A549 (cell line): ENCODE measurements at regions of chr4 and their contacts with region 1.

Region 1: DNA sequence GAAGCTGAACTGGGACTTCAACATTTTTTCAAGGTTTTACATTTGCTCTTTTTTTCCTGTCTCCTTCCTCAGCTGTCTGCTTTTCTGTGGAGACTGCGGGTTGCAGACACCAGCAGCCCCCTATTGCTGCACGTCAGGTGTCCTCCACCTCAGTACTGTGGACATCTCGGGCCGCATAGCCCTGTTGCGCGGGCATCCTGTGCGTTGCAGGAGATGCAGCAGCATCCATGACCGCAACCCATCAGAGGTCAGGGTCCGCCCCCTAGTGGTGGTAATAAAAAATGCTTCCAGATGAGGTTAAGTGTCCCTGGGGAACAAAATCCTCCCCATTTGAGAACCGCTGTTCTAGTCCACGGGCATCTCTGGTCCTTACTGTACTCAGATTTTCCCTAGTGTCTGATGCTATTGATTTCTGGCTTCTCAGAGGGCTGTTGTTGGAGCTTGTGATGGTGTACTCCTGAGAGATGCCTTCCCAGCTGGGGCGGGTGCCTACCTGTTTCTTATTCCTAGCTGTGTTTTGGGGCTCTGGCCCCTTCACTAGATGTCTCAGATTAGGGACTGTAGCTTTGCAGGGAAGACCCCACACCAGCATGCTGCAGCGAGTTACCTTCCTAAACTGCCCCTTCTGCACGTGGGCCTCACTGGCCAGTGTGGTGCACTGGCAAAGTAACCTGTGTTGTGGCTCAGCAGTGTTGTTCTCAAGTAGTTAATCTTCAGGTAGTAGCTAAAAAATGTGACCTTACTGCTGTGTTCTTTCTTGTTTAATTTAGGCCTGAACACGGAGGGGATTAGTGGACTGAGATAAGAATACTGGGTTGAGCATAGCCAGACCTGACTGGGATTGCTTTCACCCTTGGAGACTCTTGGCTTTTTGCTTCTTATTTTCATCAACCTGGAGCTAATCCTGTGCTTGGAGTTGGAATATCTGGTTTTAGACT is 28.2 kb downstream of the NSD2 start:
- DNase-seq: peak; percentile 76 to 84
- ATAC-seq: peak; percentile 97
- H3K4me3 ChIP-seq: no peak overlapping the region
- H3K27ac ChIP-seq: no peak overlapping the region
- H3K4me1 ChIP-seq: peaks cover 8% of the 10 kb centered on the region; the same call in 2 of the 3 replicates
- CTCF ChIP-seq: peak; percentile 69
- EP300 ChIP-seq: no peak
- POLR2A ChIP-seq: no peak
- RAD21 ChIP-seq: peak; percentile 70

Region 2: GRCh38 chr4:1809754-1810511 is 89.5 kb before region 1 on chr4:
- CTCF ChIA-PET with region 1: interaction called, 65 read pairs
- POLR2A ChIA-PET with region 1: no interaction called
- DNase-seq: peak; percentile 69 to 72
- ATAC-seq: peak; percentile 85 to 94
- H3K4me3 ChIP-seq: no peak overlapping the region
- H3K27ac ChIP-seq: no peak overlapping the region
- H3K4me1 ChIP-seq: no peaks in the 10 kb centered on the region
- CTCF ChIP-seq: peak; percentile 85
- EP300 ChIP-seq: no peak
- POLR2A ChIP-seq: no peak
- RAD21 ChIP-seq: peak; percentile 86 to 87

Region 3: DNA sequence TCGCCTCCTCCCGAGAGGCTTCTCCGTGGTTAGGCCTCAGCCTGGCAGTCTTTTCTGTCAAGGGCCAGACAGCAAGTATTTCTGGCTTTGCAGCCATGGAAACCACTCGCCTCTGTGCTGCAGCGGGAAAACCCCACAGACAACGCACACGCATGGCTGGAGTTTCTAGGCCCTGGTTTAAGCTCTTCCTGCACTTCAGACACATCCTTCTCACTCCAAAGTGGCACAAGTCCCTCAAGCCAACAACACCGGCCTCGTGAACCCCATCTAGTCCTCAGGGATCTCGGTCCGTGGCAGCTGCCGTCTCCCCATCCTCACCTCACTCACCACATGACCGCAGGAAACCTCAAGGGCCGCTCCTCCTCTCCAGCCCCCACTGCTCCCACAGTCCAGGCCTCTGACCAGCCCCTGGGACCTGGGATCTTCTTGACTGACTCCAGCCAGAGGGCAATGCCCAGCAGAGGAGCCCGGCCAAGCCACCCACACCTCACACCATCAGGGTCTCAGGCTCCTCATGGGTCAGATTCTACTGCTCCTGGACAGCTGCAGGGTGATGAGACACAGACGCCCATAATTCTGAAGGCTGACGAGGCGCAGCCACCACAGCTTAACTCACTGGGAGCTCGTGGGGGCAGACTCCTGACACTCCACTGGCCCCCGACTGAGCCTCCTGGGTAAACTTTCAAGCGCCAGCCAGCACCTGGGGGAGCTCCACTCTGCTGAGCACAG is 65.2 kb before region 1 on chr4:
- CTCF ChIA-PET with region 1: interaction called, 13 read pairs
- POLR2A ChIA-PET with region 1: no interaction called
- DNase-seq: no peak
- ATAC-seq: no peak
- H3K4me3 ChIP-seq: no peak overlapping the region
- H3K27ac ChIP-seq: no peak overlapping the region
- H3K4me1 ChIP-seq: no peaks in the 10 kb centered on the region
- CTCF ChIP-seq: no peak
- EP300 ChIP-seq: no peak
- POLR2A ChIP-seq: no peak
- RAD21 ChIP-seq: no peak

Region 4: GRCh38 chr4:1870578-1871443 is 28.6 kb before region 1 on chr4 and contains the start of gene NSD2:
- CTCF ChIA-PET with region 1: interaction called, 22 read pairs
- POLR2A ChIA-PET with region 1: interaction called, 3 read pairs
- DNase-seq: peak; percentile 81 to 83
- ATAC-seq: peak; percentile 70 to 74
- H3K4me3 ChIP-seq: peak within 1 kb of the TSS; percentile 85
- H3K27ac ChIP-seq: peak within 1 kb of the TSS; percentile 100
- H3K4me1 ChIP-seq: peaks cover 43% of the 10 kb centered on the region
- CTCF ChIP-seq: no peak
- EP300 ChIP-seq: no peak
- POLR2A ChIP-seq: peak; percentile 42
- RAD21 ChIP-seq: no peak
- polyA plus RNA-seq, gene NSD2: 49.3 and 52.6 TPM in 2 replicates

Region 5: GRCh38 chr4:1883583-1883982 is 15.8 kb before region 1 on chr4:
- CTCF ChIA-PET with region 1: interaction called, 60 read pairs
- POLR2A ChIA-PET with region 1: no interaction called
- DNase-seq: no peak
- ATAC-seq: no peak
- H3K4me3 ChIP-seq: no peak overlapping the region
- H3K27ac ChIP-seq: no peak overlapping the region
- H3K4me1 ChIP-seq: peaks cover 13% of the 10 kb centered on the region
- CTCF ChIP-seq: no peak
- EP300 ChIP-seq: no peak
- POLR2A ChIP-seq: no peak
- RAD21 ChIP-seq: no peak

Region 6: GRCh38 chr4:1910643-1911042 is 11.2 kb after region 1 on chr4:
- CTCF ChIA-PET with region 1: interaction called, 40 read pairs
- POLR2A ChIA-PET with region 1: no interaction called
- DNase-seq: peak; percentile 41 to 45
- ATAC-seq: peak; percentile 86 to 90
- H3K4me3 ChIP-seq: no peak overlapping the region
- H3K27ac ChIP-seq: peak overlapping the region in 1 of 2 experiments; percentile 64; a peak in 2 of 6 replicates
- H3K4me1 ChIP-seq: peaks cover 25% of the 10 kb centered on the region
- CTCF ChIP-seq: peak; percentile 52
- EP300 ChIP-seq: no peak
- POLR2A ChIP-seq: no peak
- RAD21 ChIP-seq: peak; percentile 52 to 60

Region 7: GRCh38 chr4:1922821-1923220 is 23.4 kb after region 1 on chr4:
- CTCF ChIA-PET with region 1: interaction called, 10 read pairs
- POLR2A ChIA-PET with region 1: no interaction called
- DNase-seq: no peak
- ATAC-seq: no peak
- H3K4me3 ChIP-seq: no peak overlapping the region
- H3K27ac ChIP-seq: no peak overlapping the region
- H3K4me1 ChIP-seq: 0 out of 3 replicates have a peak, but pooled peaks cover 1% of the 10 kb centered on the region
- CTCF ChIP-seq: no peak
- EP300 ChIP-seq: no peak
- POLR2A ChIP-seq: no peak
- RAD21 ChIP-seq: no peak

Region 8: GRCh38 chr4:2036866-2037265 is 137.4 kb after region 1 on chr4:
- CTCF ChIA-PET with region 1: no interaction called
- POLR2A ChIA-PET with region 1: no interaction called
- DNase-seq: no peak
- ATAC-seq: no peak
- H3K4me3 ChIP-seq: no peak overlapping the region
- H3K27ac ChIP-seq: no peak overlapping the region
- H3K4me1 ChIP-seq: no peaks in the 10 kb centered on the region
- CTCF ChIP-seq: no peak
- EP300 ChIP-seq: no peak
- POLR2A ChIP-seq: no peak
- RAD21 ChIP-seq: no peak